ENCODE measurements at regions of chr10 and their contacts with region 1.

Region 1: GRCh38 chr10:70461215-70461986 is 17.2 kb upstream of the PALD1 start:
- DNase-seq: peak in 1 of 4 donors; percentile 71
- ATAC-seq: peak; percentile 78
- H3K4me3 ChIP-seq: no peak overlapping the region
- H3K27ac ChIP-seq: no peak overlapping the region
- H3K4me1 ChIP-seq: peaks cover 10 to 27% of the 10 kb centered on the region in 2 donors
- H3K27me3 ChIP-seq: peaks cover 0 to 37% of the 10 kb centered on the region in 2 donors
- CTCF ChIP-seq: peak; percentile 74 to 80

Region 2: DNA sequence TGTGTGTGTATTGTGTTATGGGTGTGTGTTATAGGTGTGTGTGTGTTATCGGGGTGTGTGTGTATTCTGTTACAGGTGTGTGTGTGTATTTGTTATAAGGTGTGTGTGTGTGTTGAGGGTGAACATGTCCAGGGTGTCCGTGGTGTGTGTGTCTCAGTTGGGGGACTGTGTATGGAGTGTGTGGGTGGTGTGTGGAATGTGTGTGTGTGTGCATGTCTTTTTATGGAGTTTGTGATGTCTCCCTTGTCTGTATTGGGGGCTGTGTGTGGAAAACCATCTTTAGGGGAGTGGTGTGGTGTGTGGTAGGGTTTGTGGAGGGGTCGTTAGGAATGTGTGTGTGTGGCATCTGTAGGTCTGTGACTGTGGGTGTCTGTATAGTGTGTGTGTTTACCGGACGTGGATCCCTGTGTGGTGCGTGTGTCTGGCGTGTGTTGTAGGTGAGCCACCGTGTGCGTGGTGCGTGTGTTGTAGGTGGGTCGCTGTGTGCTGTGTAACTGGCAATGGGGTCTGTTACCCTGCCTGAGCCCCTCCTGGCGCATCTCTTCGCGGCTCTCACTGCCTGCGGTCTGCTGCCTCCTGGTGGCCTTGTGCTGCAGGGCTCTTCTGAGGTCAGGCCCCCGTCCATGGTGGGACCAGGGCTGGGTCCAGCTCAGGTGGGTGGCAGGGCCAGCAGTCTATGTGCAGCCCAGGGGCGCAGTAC is 78.8 kb after region 1 on chr10:
- intact Hi-C with region 1: loop called in 1 of 2 experiments (anchors 5 kb)
- DNase-seq: peak in 1 of 4 donors; percentile 39
- ATAC-seq: peak; percentile 38
- H3K4me3 ChIP-seq: no peak overlapping the region
- H3K27ac ChIP-seq: no peak overlapping the region
- H3K4me1 ChIP-seq: no peaks in the 10 kb centered on the region
- H3K27me3 ChIP-seq: no peaks in the 10 kb centered on the region
- CTCF ChIP-seq: peak; percentile 24 to 36

Region 3: GRCh38 chr10:70758757-70759514 is 297.5 kb after region 1 on chr10:
- intact Hi-C with region 1: loop called in 1 of 2 experiments (anchors 10 kb)
- DNase-seq: peak in 3 of 4 donors; percentile 52 to 83 (median 65)
- ATAC-seq: peak; percentile 75
- H3K4me3 ChIP-seq: no peak overlapping the region
- H3K27ac ChIP-seq: no peak overlapping the region
- H3K4me1 ChIP-seq: peaks cover 0 to 3% of the 10 kb centered on the region in 2 donors
- H3K27me3 ChIP-seq: no peaks in the 10 kb centered on the region
- CTCF ChIP-seq: peak; percentile 53 to 64

Region 4: DNA sequence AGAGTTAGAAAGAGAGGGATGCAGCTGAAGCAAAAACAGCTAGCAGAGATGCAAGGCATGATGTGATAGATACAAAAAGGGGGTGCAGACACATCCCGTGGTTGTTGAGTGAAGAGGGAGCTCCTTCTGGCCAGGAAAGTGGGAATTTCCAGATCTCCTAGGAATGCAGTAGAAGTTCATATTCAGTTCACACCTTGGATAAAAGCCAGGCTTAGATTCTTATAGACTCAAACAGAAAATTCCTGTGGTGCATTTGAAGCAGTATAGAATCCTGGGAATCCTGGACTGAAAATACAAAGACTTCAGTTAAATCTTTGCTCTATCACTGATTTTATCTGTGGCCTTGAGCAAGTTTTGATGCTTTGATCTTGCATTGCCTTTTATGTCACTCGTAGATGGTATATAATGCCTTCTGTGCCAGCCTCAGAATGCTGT is 388.2 kb after region 1 on chr10:
- intact Hi-C with region 1: no loop called
- DNase-seq: peak in 1 of 4 donors; percentile 37
- ATAC-seq: no peak
- H3K4me3 ChIP-seq: no peak overlapping the region
- H3K27ac ChIP-seq: no peak overlapping the region
- H3K4me1 ChIP-seq: no peaks in the 10 kb centered on the region
- H3K27me3 ChIP-seq: no peaks in the 10 kb centered on the region
- CTCF ChIP-seq: no peak

Measured in left lung (tissue), 14 donors.